ENCODE measurements at regions of chr6 and their contacts with region 1.

Region 1: GRCh38 chr6:32984605-32985389 is 16.4 kb downstream of the BRD2 start:
- DNase-seq: peak; percentile 82 to 97 (median 92)

Region 2: GRCh38 chr6:32885698-32886286 is 99.0 kb before region 1 on chr6:
- intact Hi-C with region 1: loop called (anchors 5 kb)
- DNase-seq: no peak

Region 3: GRCh38 chr6:32933636-32934085 is 51.1 kb before region 1 on chr6:
- intact Hi-C with region 1: loop called (anchors 5 kb)
- DNase-seq: peak; percentile 39 to 93 (median 80)

Region 4: DNA sequence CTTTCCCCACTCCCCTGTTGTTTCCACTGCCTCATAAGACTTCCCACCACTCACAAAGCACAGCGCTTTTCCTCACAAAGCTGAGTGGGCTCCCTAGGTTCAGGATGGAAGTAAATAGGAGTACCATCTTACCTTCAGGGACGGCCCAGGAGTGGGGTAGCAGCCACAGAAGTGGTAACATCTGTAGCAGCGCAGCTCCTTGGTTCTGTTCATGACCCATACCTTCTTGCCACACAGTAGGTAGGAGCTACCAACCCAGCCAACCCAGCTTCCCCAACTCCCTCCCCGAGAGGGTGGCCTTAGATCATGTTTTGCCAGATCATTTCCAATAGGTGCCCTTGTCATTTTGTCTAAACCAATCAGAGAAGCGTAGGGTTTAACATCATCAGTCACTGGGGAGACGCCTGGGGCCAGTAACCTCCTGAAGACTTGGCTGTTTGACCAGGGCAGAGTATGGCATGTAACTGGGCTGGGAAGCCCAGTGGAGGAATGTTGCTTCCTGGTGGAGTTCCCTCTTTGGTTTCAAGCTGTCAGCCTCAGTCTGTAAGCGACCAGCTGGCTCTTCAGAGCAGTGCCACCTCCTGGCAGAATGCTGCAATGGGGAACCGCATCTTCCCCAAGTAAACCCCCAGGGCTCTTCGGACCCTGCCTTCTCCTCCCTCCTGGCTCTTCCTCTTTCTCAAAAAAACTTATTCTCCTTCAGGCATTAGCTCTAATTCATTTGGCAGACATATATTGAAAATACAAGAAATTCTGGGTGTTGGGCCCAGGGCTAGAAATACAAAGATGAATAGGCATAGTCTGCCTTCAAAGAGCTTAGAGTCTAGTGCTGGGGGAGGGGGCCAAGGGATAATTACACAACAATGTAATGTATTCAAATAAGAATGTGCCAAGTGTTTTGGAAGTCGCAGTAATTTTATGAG is 31.7 kb before region 1 on chr6 and contains the start of gene HLA-DMA:
- intact Hi-C with region 1: no loop called
- DNase-seq: peak; percentile 32 to 88 (median 70)

Region 5: GRCh38 chr6:33535104-33535603 is 550.4 kb after region 1 on chr6:
- intact Hi-C with region 1: no loop called
- DNase-seq: peak in 5 of 42 donors; percentile 4 to 39 (median 9)

Measured in head of caudate nucleus (tissue), 42 donors.